Calu3 (cell line): ENCODE measurements at regions of chr11 and their contacts with region 1.

Region 1: DNA sequence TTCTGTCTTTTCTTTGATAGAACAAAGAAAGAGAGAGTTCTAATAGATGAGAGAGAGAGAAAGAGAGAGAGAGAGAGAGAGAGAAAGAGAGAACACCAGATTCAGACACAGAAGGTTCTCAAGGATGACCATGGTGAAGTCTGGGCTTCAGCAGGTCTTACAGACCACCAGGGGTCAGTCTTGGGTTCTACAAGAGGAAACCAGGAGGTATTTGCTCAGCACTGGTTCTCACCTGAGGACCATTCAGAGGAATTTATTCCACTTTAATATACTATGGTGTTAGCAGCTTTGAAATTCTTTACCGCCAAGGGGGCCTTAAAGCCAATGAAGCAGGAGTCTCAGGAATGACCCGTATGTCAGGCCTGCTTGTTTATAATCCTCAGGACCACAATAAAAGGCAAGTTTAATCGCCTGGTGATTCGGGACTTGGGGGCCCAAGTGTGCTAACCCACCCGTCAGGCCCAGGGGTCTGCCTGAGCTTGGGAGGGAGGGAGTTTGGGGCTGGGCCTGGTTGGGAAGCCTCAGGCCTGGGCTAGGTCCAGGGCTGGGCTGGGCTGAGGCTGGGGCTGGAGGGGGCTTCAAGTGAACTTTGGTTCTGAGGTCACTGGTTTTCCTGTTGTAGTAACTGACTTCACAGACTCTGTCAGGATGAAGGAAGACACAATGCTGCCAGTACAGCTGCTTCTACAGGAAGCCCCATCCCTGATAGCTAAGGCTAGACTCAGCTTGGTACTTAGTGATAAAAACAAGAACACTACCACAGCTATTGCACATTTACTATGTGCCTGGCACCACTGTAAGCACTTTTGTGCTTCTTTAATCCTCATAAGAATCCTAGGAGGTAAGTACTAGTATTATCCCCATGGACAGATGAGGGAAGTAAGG is 179.2 kb upstream of the ZBED5 start:
- DNase-seq: peak; percentile 52
- H3K4me3 Mint-ChIP-seq: no peak overlapping the region
- H3K27ac Mint-ChIP-seq: no peak overlapping the region
- H3K4me1 Mint-ChIP-seq: no peaks in the 10 kb centered on the region
- H3K27me3 Mint-ChIP-seq: peaks cover 77% of the 10 kb centered on the region
- CTCF ChIP-seq: peak; percentile 47

Region 2: GRCh38 chr11:10899121-10899830 is 137.8 kb before region 1 on chr11:
- CTCF ChIA-PET with region 1: no interaction called
- intact Hi-C with region 1: no loop called
- DNase-seq: peak; percentile 10
- H3K4me3 Mint-ChIP-seq: peak overlapping the region; percentile 48
- H3K27ac Mint-ChIP-seq: peak overlapping the region; percentile 94
- H3K4me1 Mint-ChIP-seq: peaks cover 66% of the 10 kb centered on the region
- H3K27me3 Mint-ChIP-seq: no peaks in the 10 kb centered on the region
- CTCF ChIP-seq: no peak

Region 3: GRCh38 chr11:11105358-11105757 is 68.3 kb after region 1 on chr11:
- CTCF ChIA-PET with region 1: no interaction called
- intact Hi-C with region 1: no loop called
- DNase-seq: no peak
- H3K4me3 Mint-ChIP-seq: no peak overlapping the region
- H3K27ac Mint-ChIP-seq: no peak overlapping the region
- H3K4me1 Mint-ChIP-seq: no peaks in the 10 kb centered on the region
- H3K27me3 Mint-ChIP-seq: peaks cover 72% of the 10 kb centered on the region
- CTCF ChIP-seq: no peak

Region 4: GRCh38 chr11:11230802-11231562 is 193.9 kb after region 1 on chr11:
- CTCF ChIA-PET with region 1: no interaction called
- intact Hi-C with region 1: no loop called
- DNase-seq: peak; percentile 28
- H3K4me3 Mint-ChIP-seq: no peak overlapping the region
- H3K27ac Mint-ChIP-seq: no peak overlapping the region
- H3K4me1 Mint-ChIP-seq: no peaks in the 10 kb centered on the region
- H3K27me3 Mint-ChIP-seq: peaks cover 55% of the 10 kb centered on the region
- CTCF ChIP-seq: no peak

Region 5: DNA sequence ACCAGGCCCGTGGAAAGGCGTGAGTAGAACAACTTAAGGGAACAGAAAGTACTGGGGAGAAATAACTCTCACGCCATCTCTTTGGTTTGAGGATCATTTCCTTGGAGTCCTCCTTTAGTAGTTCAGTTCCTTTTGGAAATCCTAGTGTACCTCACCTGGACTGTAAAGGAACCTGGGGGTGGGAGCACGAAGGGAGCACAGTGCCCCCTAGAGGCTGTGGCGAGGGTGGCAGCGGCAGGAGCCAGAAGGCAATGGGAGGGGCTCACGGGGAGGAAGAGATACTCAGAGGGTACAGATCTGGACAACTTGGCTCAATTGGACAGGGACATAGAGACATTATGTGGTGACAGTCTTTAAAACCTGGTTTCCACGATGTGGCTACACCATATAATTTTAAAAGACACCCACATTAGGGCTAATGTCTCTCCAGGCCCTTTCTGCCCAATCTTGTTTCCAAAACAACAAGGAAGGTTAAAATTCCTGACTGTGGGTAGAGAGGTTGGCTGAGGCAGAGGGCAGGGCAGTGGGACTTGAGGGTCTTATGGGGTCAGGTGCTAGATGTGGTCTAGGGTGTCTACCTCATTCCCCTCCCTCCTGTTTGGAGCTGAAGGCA is 229.0 kb after region 1 on chr11:
- CTCF ChIA-PET with region 1: no interaction called
- intact Hi-C with region 1: loop called (anchors 2 kb)
- DNase-seq: peak; percentile 75
- H3K4me3 Mint-ChIP-seq: no peak overlapping the region
- H3K27ac Mint-ChIP-seq: no peak overlapping the region
- H3K4me1 Mint-ChIP-seq: peaks cover 24% of the 10 kb centered on the region
- H3K27me3 Mint-ChIP-seq: peaks cover 13% of the 10 kb centered on the region
- CTCF ChIP-seq: peak; percentile 81

Region 6: GRCh38 chr11:11621573-11622319 is 584.7 kb after region 1 on chr11 and contains the start of gene GALNT18:
- CTCF ChIA-PET with region 1: no interaction called
- intact Hi-C with region 1: loop called (anchors 10 kb)
- DNase-seq: peak; percentile 97
- H3K4me3 Mint-ChIP-seq: peak within 1 kb of the TSS; percentile 96
- H3K27ac Mint-ChIP-seq: peak within 1 kb of the TSS; percentile 30
- H3K4me1 Mint-ChIP-seq: peaks cover 22% of the 10 kb centered on the region
- H3K27me3 Mint-ChIP-seq: no peaks in the 10 kb centered on the region
- CTCF ChIP-seq: peak; percentile 50
- total RNA-seq, gene GALNT18: 9.2 and 9.9 TPM in 2 replicates